ENCODE measurements at regions of chr2 and their contacts with region 1.

Region 1: GRCh38 chr2:199798831-199799580 is 52.0 kb downstream of the FTCDNL1 start:
- DNase-seq: peak in 3 of 5 donors; percentile 22 to 45 (median 35)
- ATAC-seq: peak in 1 of 4 donors; percentile 61
- H3K4me3 ChIP-seq: no peak overlapping the region
- H3K27ac ChIP-seq: no peak overlapping the region
- H3K4me1 ChIP-seq: peaks cover 0 to 11% (median 0%) of the 10 kb centered on the region in 12 donors
- H3K27me3 ChIP-seq: no peaks in the 10 kb centered on the region
- CTCF ChIP-seq: no peak
- POLR2A ChIP-seq: no peak

Region 2: GRCh38 chr2:199760574-199760973 is 38.4 kb before region 1 on chr2:
- intact Hi-C with region 1: loop called in 1 of 10 experiments (anchors 1 kb)
- DNase-seq: no peak
- ATAC-seq: no peak
- H3K4me3 ChIP-seq: no peak overlapping the region
- H3K27ac ChIP-seq: no peak overlapping the region
- H3K4me1 ChIP-seq: peaks cover 0 to 8% (median 0%) of the 10 kb centered on the region in 12 donors
- H3K27me3 ChIP-seq: peaks cover 0 to 2% (median 0%) of the 10 kb centered on the region in 9 donors
- CTCF ChIP-seq: no peak
- POLR2A ChIP-seq: no peak

Region 3: GRCh38 chr2:200225951-200226350 is 426.9 kb after region 1 on chr2:
- intact Hi-C with region 1: no loop called
- DNase-seq: peak in 1 of 5 donors; percentile 21
- ATAC-seq: peak in 2 of 4 donors; percentile 47 to 74
- H3K4me3 ChIP-seq: no peak overlapping the region
- H3K27ac ChIP-seq: peak overlapping the region in 3 of 12 donors; percentile 5 to 35 (median 24)
- H3K4me1 ChIP-seq: peaks cover 0 to 28% (median 10%) of the 10 kb centered on the region in 12 donors
- H3K27me3 ChIP-seq: no peaks in the 10 kb centered on the region
- CTCF ChIP-seq: no peak
- POLR2A ChIP-seq: no peak

Measured in heart left ventricle (tissue), 16 donors.